Natural killer cell (primary cell): ENCODE measurements at regions of chr1 and their contacts with region 1.

Region 1: DNA sequence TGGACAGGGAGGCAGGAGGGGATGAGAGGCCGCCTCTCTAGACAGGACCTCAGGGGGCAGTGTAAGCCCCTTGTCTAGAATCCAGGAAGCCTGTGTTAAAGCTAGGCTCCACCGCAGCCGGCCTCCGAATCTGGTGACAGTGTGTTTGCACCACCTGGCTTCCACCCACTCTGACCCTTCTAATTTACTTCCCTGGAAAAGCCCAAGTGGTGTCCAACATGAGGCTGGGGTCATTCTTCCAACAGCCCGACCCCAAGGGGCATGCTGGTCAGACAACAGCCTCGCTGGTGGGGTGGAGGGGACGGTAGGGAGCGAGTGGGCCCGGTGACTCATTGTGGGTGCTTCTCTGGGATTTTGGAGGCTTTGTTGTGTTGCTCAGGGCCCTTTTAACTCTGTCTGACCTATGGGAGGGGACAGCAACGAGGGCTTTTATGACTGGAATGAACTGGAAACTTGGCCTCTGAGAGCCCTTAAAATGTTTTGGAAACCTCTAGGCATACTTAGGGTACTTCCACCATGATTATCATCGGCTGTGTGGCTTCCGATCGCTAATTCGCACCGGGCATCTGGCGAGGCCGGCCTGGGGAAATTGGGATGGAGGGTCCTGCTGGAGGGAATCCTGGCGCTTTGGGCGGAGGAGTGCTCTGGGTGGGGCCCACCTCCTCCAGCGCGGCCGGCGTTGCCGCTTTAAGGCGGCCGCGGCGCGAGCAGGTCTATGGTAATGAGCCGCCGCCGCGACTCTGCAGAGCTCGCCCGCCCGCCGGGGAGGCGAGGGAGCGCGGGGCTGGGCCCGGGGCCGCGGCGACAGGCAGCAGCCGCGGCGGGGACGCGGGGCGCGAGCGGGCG is at the start of gene CELSR2:
- DNase-seq: peak; percentile 58 to 82
- ATAC-seq: peak; percentile 87 to 96 (median 96)
- H3K4me3 ChIP-seq: peak within 1 kb of the TSS; percentile 26
- H3K4me3 Mint-ChIP-seq: peak within 1 kb of the TSS; percentile 78
- H3K27ac ChIP-seq: no peak within 1 kb of the TSS
- H3K27ac Mint-ChIP-seq: peak within 1 kb of the TSS in 1 of 2 donors; percentile 64
- H3K4me1 ChIP-seq: peaks cover 24% of the 10 kb centered on the region
- H3K4me1 Mint-ChIP-seq: peaks cover 0 to 28% of the 10 kb centered on the region in 2 donors
- H3K27me3 ChIP-seq: peaks cover 11% of the 10 kb centered on the region
- H3K27me3 Mint-ChIP-seq: peaks cover 9 to 14% of the 10 kb centered on the region in 2 donors
- CTCF ChIP-seq: no peak
- total RNA-seq, gene CELSR2: 7.1 to 9.7 (median 7.4) TPM

Region 2: DNA sequence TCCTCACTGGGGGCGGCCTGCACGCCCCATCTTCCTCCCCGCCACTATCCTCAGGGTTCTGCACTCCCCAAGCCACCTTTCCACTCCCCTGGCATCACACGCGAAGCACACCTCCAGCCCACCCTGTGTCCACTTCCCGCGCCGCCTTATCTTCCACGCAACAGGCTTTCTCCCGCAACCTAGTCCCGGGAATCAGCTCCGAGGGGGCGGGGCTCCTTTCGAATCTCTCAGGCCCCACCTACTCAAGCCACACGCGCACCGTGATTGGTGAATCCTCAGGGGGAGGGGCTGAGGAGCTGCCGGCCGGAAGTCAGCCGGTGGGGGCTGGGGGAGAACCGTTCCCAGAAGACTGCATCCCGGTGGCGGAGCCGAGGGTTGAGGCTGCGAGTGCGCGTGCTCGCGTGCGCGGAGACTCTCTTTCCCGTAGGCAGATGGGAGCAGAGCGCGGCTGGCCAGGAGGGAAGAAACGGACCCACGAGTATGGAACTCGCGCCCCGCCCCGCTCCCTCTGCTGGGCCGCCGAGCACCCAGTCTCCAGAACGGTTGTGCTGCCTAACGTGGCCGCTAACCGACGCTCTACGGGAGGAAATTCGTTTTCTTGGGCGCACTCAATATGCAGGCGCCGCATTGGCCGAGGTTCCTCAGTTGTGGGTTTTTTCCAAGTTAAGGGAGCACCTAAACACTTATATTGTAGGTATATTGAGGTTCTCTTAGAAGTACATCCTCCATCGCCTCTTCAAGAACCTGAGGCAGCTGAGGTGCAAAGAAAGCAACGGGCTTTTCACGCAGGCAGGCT is 34.1 kb after region 1 on chr1 and contains the start of gene PSRC1:
- intact Hi-C with region 1: loop called (anchors 1 kb)
- DNase-seq: peak; percentile 93 to 95
- ATAC-seq: peak; percentile 96 to 98 (median 97)
- H3K4me3 ChIP-seq: peak within 1 kb of the TSS; percentile 66
- H3K4me3 Mint-ChIP-seq: peak within 1 kb of the TSS; percentile 99
- H3K27ac ChIP-seq: peak within 1 kb of the TSS; percentile 67
- H3K27ac Mint-ChIP-seq: peak within 1 kb of the TSS; percentile 86 to 90
- H3K4me1 ChIP-seq: peaks cover 20% of the 10 kb centered on the region
- H3K4me1 Mint-ChIP-seq: peaks cover 21% of the 10 kb centered on the region in 2 donors
- H3K27me3 ChIP-seq: no peaks in the 10 kb centered on the region
- H3K27me3 Mint-ChIP-seq: no peaks in the 10 kb centered on the region
- CTCF ChIP-seq: peak; percentile 65
- total RNA-seq, gene PSRC1: 1.1 to 2.4 (median 1.9) TPM